AG04450 (cell line): ENCODE measurements at regions of chr6 and their contacts with region 1.

Region 1: GRCh38 chr6:7276199-7276524 is 36.8 kb downstream of the SSR1 start:
- DNase-seq: no peak
- H3K4me3 ChIP-seq: no peak overlapping the region
- H3K27ac ChIP-seq: no peak overlapping the region
- H3K27me3 ChIP-seq: no peaks in the 10 kb centered on the region
- CTCF ChIP-seq: no peak

Region 2: DNA sequence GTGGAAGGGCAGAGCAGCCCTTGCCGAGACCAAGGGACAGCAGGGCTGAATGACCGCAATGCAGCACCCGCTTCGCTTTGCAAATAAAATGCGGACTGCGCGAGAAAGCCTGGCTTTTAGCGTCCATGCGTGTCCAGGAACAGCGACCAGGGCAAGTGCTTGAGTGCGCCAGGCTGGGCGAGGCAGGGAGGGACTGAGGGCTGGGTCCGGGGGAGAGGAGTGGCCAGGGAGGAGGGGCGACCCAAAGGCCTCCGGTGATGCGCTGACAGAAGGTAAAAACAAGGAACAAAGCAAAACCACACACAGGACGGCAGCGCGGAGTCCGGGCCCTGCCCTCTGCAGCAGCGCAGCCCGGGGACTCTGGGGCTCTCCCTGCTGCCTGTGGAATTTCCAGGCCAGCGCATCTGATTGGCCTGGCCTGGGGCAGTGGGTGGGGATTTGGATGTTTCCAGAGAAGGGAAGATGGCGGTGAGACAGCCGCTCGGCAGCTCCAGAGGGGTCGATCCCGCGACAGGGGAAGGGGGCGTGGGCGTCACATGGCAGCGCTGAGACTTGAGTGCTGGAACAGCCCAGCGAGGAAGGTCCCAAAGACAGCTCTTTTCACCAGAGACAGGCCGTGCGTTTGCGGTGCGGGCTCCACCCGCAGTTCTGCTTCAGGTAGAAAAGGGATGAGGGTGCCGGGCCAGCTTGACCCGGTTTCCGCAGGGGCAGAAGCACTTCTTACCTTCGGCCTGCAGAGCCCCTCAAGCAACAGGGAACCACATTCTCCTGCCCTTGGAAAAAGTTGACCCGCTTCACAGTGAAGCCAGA is 14.9 kb before region 1 on chr6:
- CTCF ChIA-PET with region 1: interaction called, 17 read pairs
- POLR2A ChIA-PET with region 1: no interaction called
- DNase-seq: peak; percentile 62
- H3K4me3 ChIP-seq: peak overlapping the region; percentile 80
- H3K27ac ChIP-seq: peak overlapping the region; percentile 75
- H3K27me3 ChIP-seq: no peaks in the 10 kb centered on the region
- CTCF ChIP-seq: no peak

Region 3: GRCh38 chr6:7292596-7293255 is 16.6 kb after region 1 on chr6:
- CTCF ChIA-PET with region 1: interaction called, 70 read pairs
- POLR2A ChIA-PET with region 1: no interaction called
- DNase-seq: no peak
- H3K4me3 ChIP-seq: no peak overlapping the region
- H3K27ac ChIP-seq: no peak overlapping the region
- H3K27me3 ChIP-seq: no peaks in the 10 kb centered on the region
- CTCF ChIP-seq: no peak

Region 4: DNA sequence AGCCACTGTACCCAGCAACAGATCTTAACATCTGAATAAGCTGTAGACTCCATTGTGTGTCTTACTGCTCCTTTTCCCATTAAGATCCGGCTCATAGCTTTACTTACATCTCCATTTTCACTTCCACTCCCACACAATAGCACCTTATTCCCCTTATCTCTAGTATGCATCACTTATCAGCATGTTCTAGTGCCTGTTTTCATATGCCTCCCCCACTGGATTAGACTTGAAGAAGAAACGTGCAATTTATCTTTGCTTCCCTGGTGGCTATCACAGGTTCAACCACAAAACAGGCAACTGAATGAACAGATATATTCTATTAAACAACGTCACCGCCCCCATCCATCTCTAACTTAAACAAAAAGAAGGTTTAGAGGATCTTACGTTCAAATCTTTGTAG is 24.8 kb after region 1 on chr6:
- CTCF ChIA-PET with region 1: interaction called, 15 read pairs
- POLR2A ChIA-PET with region 1: no interaction called
- DNase-seq: no peak
- H3K4me3 ChIP-seq: no peak overlapping the region
- H3K27ac ChIP-seq: no peak overlapping the region
- H3K27me3 ChIP-seq: no peaks in the 10 kb centered on the region
- CTCF ChIP-seq: no peak

Region 5: GRCh38 chr6:7431674-7432390 is 155.7 kb after region 1 on chr6:
- CTCF ChIA-PET with region 1: no interaction called
- POLR2A ChIA-PET with region 1: no interaction called
- DNase-seq: no peak
- H3K4me3 ChIP-seq: no peak overlapping the region
- H3K27ac ChIP-seq: no peak overlapping the region
- H3K27me3 ChIP-seq: no peaks in the 10 kb centered on the region
- CTCF ChIP-seq: no peak

Region 6: DNA sequence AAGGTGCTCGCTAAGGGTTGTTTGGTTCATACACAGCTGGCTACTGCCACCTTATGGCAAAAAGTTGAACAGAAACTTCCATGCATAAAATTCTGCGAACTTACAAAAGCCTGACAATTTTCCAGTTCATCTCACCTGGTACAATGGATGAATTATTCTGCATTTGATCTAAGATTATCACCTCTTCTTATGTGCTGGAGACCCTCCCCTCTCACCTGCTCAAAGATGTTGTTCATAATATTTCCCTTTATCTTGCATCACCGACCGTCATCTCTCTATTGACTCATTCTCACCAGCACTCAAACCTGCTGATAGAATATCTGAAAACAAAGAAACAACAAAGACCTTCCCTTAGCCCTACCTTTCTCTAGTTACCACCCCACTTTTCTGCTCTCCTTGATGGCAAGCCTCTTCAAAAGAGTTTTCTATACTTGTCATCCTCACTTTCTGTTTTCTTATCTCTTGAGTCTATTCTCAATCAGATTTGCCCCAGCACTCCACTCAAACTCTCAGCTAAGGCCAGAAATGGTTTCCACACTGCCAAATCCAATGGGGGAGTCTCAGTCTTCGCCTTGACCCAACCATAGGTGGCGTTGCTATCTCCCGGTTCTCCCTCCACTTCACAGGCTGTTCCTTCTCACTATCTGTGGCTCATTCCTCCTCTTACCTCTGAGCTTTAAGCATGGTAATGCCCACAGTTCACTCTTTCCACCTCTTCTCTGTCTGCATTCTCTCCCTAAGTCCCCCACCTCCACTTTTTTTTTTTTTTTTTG is 339.6 kb after region 1 on chr6:
- CTCF ChIA-PET with region 1: interaction called, 65 read pairs
- POLR2A ChIA-PET with region 1: interaction called, 5 read pairs
- DNase-seq: no peak
- H3K4me3 ChIP-seq: no peak overlapping the region
- H3K27ac ChIP-seq: no peak overlapping the region
- H3K27me3 ChIP-seq: no peaks in the 10 kb centered on the region
- CTCF ChIP-seq: peak; percentile 79